Posterior cingulate gyrus (tissue), 11 donors: ENCODE measurements at regions of chr9 and their contacts with region 1.

Region 1: GRCh38 chr9:6305954-6306563 is 22.1 kb upstream of the TPD52L3 start:
- DNase-seq: no peak

Region 2: DNA sequence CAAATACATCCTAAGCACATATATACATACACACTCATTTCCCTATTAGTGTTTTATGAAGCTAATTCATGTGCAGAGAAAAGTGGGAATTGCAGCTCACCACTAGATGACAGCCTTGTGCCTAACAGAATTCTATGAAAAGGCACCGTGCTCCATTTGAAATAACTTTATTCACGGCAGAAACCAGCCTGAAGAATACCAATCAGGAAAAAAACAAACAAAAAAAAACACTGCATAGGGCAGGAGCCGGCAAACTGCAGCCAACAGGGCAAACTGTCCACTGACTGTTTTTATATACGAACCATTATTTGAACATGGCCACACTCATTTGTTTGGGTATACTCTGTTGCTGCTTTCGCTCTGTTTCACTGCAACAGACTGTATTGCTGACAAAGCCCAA is 506.7 kb before region 1 on chr9:
- intact Hi-C with region 1: loop called (anchors 5 kb)
- DNase-seq: peak in 3 of 10 donors; percentile 24 to 59 (median 26)

Region 3: GRCh38 chr9:5886114-5886939 is 419.7 kb before region 1 on chr9:
- intact Hi-C with region 1: loop called (anchors 2 kb)
- DNase-seq: peak; percentile 49 to 96 (median 80)

Region 4: GRCh38 chr9:6055213-6055612 is 250.8 kb before region 1 on chr9:
- intact Hi-C with region 1: loop called (anchors 2 kb)
- DNase-seq: no peak

Region 5: DNA sequence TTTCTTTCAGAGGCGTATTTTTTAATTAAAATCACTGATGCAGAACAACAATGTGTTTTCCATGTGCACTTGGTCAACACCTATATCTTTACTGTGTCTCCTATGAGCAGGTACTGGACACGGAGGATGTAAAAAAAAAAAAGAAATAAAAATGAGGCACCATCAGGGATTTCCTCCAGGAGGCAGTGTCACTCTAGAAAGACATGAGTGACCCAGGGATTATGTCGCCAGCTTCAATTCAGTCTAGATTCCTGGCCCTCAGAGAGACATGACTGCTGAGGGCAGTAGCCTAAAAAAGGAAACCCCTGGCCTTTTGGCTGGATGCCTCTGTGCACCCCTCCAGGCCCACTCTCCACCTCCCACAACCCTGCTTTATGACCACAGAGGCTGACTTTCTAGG is 108.7 kb before region 1 on chr9:
- intact Hi-C with region 1: loop called (anchors 2 kb)
- DNase-seq: no peak